ENCODE measurements at regions of chr1 and their contacts with region 1.

Region 1: GRCh38 chr1:207885129-207886032 is 25.5 kb downstream of the CD34 start:
- DNase-seq: peak; percentile 84
- H3K4me3 ChIP-seq: no peak overlapping the region
- H3K27ac ChIP-seq: peak overlapping the region; percentile 44 to 75
- H3K4me1 ChIP-seq: no peaks in the 10 kb centered on the region
- H3K27me3 ChIP-seq: no peaks in the 10 kb centered on the region
- CTCF ChIP-seq: peak; percentile 94 to 96 (median 96)
- POLR2A ChIP-seq: no peak

Region 2: GRCh38 chr1:207631137-207631536 is 254.2 kb before region 1 on chr1:
- intact Hi-C with region 1: no loop called
- DNase-seq: no peak
- H3K4me3 ChIP-seq: no peak overlapping the region
- H3K27ac ChIP-seq: no peak overlapping the region
- H3K4me1 ChIP-seq: no peaks in the 10 kb centered on the region
- H3K27me3 ChIP-seq: no peaks in the 10 kb centered on the region
- CTCF ChIP-seq: no peak
- POLR2A ChIP-seq: no peak

Region 3: DNA sequence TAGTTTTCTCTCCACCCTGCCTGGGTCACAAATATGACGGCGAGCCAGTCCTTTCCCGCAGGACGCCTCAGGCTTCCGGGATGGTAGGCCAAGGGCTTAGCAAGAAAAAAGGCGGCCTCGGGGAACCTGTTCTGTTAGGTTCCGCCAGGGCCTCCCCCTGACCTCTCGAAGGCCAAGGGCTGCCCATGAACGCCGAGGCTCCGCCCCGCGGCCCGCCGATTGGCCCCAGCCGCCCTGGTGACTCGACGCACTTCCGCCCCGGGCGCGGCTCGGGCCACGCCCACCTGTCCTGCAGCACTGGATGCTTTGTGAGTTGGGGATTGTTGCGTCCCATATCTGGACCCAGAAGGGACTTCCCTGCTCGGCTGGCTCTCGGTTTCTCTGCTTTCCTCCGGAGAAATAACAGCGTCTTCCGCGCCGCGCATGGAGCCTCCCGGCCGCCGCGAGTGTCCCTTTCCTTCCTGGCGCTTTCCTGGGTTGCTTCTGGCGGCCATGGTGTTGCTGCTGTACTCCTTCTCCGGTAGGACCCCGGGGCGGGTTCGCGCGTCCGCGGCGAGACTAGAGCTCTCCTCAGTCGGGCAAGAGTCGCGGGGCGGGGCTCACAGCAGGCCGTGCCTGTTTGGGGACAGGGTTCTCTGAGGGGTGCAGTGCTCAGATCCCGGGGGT is 133.5 kb before region 1 on chr1 and contains the start of gene CD46:
- intact Hi-C with region 1: loop called (anchors 5 kb)
- DNase-seq: peak; percentile 98
- H3K4me3 ChIP-seq: peak within 1 kb of the TSS; percentile 73 to 95
- H3K27ac ChIP-seq: peak within 1 kb of the TSS; percentile 95 to 97
- H3K4me1 ChIP-seq: peaks cover 6% of the 10 kb centered on the region
- H3K27me3 ChIP-seq: no peaks in the 10 kb centered on the region
- CTCF ChIP-seq: peak in 2 of 4 experiments; percentile 25 to 28
- POLR2A ChIP-seq: peak; percentile 98
- total RNA-seq, gene CD46: 173 to 327 TPM

Region 4: DNA sequence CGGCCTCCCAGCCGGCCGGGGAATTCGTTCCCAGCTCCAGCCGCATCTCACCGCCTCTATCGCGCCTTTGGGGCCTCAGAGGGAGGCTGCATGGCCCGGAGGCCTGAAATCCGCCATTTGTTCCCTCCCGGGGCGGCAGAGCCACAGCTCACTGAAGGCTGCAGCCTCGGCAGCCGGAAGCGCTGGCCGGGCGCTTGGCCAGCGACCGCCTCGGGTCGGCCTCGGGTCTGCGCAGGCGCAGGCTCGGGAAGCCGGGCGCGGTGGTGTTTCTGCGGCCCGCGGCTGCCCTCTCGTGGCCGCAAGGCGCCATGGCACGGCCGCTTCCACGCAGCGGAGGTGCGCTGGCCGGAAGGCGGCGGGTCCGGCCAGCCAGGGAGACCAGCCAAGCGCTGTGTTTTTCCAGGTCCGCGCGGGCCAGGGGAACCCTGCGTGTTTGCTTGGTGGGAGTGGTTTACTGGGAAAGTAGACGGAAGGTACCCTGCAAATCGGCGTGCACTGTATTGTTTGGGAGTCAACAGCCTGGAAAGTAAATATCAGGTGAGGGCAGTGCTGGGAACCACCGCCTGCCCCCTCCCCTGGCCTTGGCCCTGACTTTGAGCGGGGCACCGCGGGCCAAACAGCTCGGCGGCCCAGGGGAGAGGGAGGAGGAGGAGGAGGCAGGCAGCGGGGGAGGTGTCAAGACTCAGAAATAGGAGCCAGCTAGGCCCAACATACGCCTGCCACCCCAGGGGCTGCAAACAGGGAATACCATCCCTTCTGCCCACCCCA is 78.2 kb after region 1 on chr1:
- intact Hi-C with region 1: loop called (anchors 1 kb)
- DNase-seq: peak; percentile 96
- H3K4me3 ChIP-seq: peak overlapping the region; percentile 41 to 44
- H3K27ac ChIP-seq: peak overlapping the region; percentile 91 to 94
- H3K4me1 ChIP-seq: peaks cover 13% of the 10 kb centered on the region
- H3K27me3 ChIP-seq: no peaks in the 10 kb centered on the region
- CTCF ChIP-seq: peak; percentile 100
- POLR2A ChIP-seq: peak; percentile 89

Region 5: GRCh38 chr1:208245185-208245705 is 359.9 kb after region 1 on chr1:
- intact Hi-C with region 1: loop called (anchors 10 kb)
- DNase-seq: peak; percentile 90
- H3K4me3 ChIP-seq: peak overlapping the region; percentile 63 to 80
- H3K27ac ChIP-seq: peak overlapping the region; percentile 81 to 89
- H3K4me1 ChIP-seq: peaks cover 6% of the 10 kb centered on the region
- H3K27me3 ChIP-seq: no peaks in the 10 kb centered on the region
- CTCF ChIP-seq: peak; percentile 45 to 89 (median 88)
- POLR2A ChIP-seq: no peak